ENCODE measurements at regions of chr3 and their contacts with region 1.

Region 1: DNA sequence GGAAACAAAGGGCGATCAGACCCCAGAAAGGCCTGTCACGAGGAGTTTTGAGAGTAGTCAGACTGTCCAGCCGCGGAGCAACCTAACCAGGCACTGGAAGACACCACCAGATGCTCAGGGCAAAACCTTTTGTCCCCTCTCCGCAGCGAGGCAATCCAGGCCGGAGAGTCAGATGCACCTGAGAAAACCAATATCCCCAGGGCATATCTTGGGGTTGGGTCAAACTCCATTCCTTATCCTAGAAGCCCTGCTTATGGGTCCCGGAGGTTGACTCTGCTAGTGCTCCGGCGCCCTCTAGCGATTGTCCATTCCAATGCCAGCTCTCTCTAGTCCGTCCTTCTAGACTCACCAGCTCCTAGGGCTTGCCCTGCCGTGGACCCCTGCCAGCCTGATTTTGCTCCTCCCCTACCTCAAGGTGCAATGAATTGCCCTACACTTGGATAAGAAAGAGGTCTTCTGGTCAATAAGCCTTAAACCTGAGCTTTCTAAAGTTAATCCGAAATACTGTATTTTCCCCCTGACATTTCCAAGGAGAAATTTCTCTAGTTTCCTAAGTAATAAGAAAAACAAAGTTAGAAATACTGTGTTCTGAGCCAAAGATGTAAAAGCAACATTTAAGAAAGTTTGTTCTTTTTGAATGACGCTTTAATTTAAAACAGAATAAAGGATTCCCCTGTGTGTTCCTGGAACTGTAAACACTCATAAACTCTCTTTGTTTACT is 5.5 kb downstream of the CPNE4 start:
- DNase-seq: peak; percentile 74
- H3K4me3 ChIP-seq: no peak overlapping the region
- H3K27ac ChIP-seq: no peak overlapping the region
- H3K4me1 ChIP-seq: no peaks in the 10 kb centered on the region
- H3K27me3 ChIP-seq: peaks cover 7% of the 10 kb centered on the region
- CTCF ChIP-seq: peak; percentile 83 to 98

Region 2: DNA sequence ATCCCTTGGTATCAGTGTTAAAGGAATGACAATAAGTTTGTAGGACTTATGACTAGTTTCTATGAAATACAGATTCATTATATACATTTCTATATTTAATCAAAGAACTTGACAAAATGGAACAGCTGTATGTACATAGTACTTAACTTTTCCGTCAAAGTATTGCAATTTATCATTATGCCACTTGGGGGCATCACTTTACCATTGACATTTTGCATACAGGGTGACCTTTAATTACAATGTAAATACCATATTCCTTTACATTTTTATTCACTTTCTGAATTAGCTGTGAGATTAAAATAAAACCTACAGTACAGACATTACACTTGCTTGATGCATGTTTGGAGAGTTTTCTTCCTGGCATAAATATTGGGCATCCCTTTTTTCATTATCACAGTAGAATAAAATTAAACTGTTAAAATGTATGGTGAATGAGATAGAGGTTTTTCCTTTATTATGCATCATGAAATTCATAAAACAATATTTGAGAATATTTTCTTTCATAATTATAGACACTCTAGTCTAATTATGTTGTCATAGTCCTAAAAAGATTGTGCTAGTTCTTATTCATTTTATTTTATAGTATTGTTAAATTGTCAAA is 995.8 kb before region 1 on chr3:
- CTCF ChIA-PET with region 1: no interaction called
- dilution Hi-C with region 1: no loop called
- in situ Hi-C with region 1: loop called in 1 of 2 experiments (anchors 25 kb)
- intact Hi-C with region 1: loop called (anchors 2 kb)
- DNase-seq: peak; percentile 31
- H3K4me3 ChIP-seq: no peak overlapping the region
- H3K27ac ChIP-seq: no peak overlapping the region
- H3K4me1 ChIP-seq: no peaks in the 10 kb centered on the region
- H3K27me3 ChIP-seq: no peaks in the 10 kb centered on the region
- CTCF ChIP-seq: peak; percentile 59 to 64

Region 3: GRCh38 chr3:131502530-131503245 is 526.7 kb before region 1 on chr3 and contains the start of gene MRPL3:
- CTCF ChIA-PET with region 1: no interaction called
- dilution Hi-C with region 1: no loop called
- in situ Hi-C with region 1: no loop called
- intact Hi-C with region 1: loop called (anchors 5 kb)
- DNase-seq: peak; percentile 86
- H3K4me3 ChIP-seq: peak within 1 kb of the TSS; percentile 78 to 99 (median 88)
- H3K27ac ChIP-seq: peak within 1 kb of the TSS; percentile 72
- H3K4me1 ChIP-seq: peaks cover 15% of the 10 kb centered on the region
- H3K27me3 ChIP-seq: no peaks in the 10 kb centered on the region
- CTCF ChIP-seq: no peak
- total RNA-seq, gene MRPL3: 78.9 to 103 TPM

Region 4: GRCh38 chr3:131794766-131795388 is 234.5 kb before region 1 on chr3:
- CTCF ChIA-PET with region 1: no interaction called
- dilution Hi-C with region 1: no loop called
- in situ Hi-C with region 1: loop called (anchors 10 to 25 kb)
- intact Hi-C with region 1: loop called (anchors 1 kb)
- DNase-seq: peak; percentile 29
- H3K4me3 ChIP-seq: no peak overlapping the region
- H3K27ac ChIP-seq: no peak overlapping the region
- H3K4me1 ChIP-seq: no peaks in the 10 kb centered on the region
- H3K27me3 ChIP-seq: no peaks in the 10 kb centered on the region
- CTCF ChIP-seq: peak; percentile 89 to 95

Region 5: GRCh38 chr3:132006605-132007204 is 22.6 kb before region 1 on chr3:
- CTCF ChIA-PET with region 1: no interaction called
- dilution Hi-C with region 1: no loop called
- in situ Hi-C with region 1: no loop called
- intact Hi-C with region 1: loop called (anchors 1 kb)
- DNase-seq: peak; percentile 55
- H3K4me3 ChIP-seq: no peak overlapping the region
- H3K27ac ChIP-seq: no peak overlapping the region
- H3K4me1 ChIP-seq: no peaks in the 10 kb centered on the region
- H3K27me3 ChIP-seq: no peaks in the 10 kb centered on the region
- CTCF ChIP-seq: peak; percentile 71 to 72

Measured in mammary epithelial cell (primary cell).